ENCODE measurements at regions of chr2 and their contacts with region 1.

Region 1: GRCh38 chr2:223957092-223957851 is at the start of gene MRPL44:
- DNase-seq: peak; percentile 98
- ATAC-seq: peak; percentile 97
- H3K4me3 Mint-ChIP-seq: peak within 1 kb of the TSS; percentile 94
- H3K27ac Mint-ChIP-seq: peak within 1 kb of the TSS; percentile 92
- H3K4me1 Mint-ChIP-seq: peaks cover 74% of the 10 kb centered on the region
- H3K27me3 Mint-ChIP-seq: no peaks in the 10 kb centered on the region
- total RNA-seq, gene MRPL44: 37.5 to 39.7 TPM

Region 2: GRCh38 chr2:223760838-223761502 is 196.3 kb before region 1 on chr2:
- CTCF ChIA-PET with region 1: no interaction called
- POLR2A ChIA-PET with region 1: interaction called, 3 read pairs
- intact Hi-C with region 1: loop called in 1 of 2 experiments (anchors 5 kb)
- DNase-seq: peak; percentile 76
- ATAC-seq: peak; percentile 93
- H3K4me3 Mint-ChIP-seq: no peak overlapping the region
- H3K27ac Mint-ChIP-seq: peak overlapping the region; percentile 73
- H3K4me1 Mint-ChIP-seq: peaks cover 22% of the 10 kb centered on the region
- H3K27me3 Mint-ChIP-seq: no peaks in the 10 kb centered on the region

Region 3: DNA sequence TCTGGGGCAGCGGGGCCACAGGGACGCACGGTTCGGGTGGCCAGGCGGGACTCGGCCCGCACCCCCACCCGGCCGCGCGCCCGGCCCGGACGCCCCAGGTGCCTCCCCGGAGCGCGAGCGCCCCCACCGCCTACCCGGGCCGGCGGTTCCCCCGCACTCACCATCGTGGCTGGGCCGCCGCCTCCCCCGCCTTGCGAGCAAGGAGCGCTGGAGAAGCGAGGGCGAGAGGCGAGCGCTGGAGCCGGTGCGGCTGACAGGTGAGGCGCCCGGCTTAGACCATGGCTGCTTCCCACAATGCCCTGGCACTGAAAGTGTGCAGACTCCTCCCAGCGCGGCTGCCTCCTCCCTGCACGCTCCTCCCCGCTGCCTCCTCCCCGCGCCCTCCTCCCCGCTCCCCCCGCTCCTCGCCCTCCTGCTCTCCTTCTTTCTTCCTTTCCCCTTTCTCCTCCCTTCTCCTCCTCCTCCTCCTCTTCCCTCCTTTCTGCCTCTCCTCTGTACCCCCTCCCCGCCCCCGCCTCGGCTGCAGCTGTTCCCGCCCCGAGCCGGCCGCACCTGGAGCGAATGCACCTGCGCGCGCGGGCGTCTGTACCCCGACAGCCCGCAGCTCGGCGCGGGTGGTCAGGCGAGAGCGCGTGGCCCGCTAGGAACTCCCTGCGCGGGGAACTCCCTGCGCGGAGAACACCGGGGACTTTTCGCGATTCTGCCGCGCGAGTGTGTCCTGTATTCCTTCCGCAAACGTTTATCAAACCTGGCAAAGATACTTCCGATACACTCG is 119.8 kb before region 1 on chr2 and contains the start of gene AP1S3:
- CTCF ChIA-PET with region 1: no interaction called
- POLR2A ChIA-PET with region 1: no interaction called
- intact Hi-C with region 1: loop called (anchors 1 to 5 kb)
- DNase-seq: peak; percentile 88
- ATAC-seq: peak; percentile 98
- H3K4me3 Mint-ChIP-seq: peak within 1 kb of the TSS; percentile 86
- H3K27ac Mint-ChIP-seq: peak within 1 kb of the TSS; percentile 82
- H3K4me1 Mint-ChIP-seq: peaks cover 13% of the 10 kb centered on the region
- H3K27me3 Mint-ChIP-seq: no peaks in the 10 kb centered on the region
- total RNA-seq, gene AP1S3: 8.8 to 10.1 TPM

Region 4: DNA sequence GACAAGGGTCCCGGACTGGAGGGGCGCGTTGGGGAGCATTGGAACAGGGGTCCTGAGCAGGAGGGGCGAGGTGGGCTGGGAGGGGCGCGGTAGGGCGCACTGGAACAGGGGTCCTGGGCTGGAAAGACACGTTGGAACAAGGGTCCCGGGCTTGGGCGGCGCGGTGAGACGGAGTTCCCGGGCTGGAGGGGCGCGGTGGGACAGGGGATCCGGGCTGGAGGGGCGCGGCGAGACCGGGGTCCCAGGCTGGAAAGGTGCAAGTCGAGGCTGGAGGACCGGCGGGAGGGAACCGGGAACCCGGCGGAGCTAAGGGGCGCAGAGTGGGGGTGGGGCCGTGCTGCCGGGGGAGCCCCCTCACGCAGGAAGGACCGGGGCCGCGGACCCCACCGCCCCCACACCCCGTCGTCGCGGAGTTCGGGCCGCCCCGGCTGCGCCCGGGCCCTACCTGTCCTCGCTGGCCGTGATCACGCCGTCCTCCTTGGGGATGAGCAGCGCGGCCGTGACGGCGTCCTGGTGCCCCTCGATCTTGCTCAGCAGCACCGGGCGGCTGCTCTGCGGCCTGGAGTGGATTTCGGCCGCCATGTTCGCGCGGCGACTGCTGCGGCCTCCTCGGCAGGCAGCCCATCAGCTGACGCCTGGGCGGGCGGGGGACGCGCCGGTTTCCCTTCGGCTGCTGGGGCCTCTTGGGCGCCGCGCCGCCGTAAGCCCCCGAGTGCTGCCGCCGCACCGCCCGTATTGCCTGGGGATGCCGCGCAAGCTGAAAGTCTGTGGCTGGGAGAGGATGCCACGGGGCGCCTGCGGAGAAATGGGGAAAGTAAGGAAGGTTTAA is 12.4 kb before region 1 on chr2 and contains the start of gene WDFY1:
- CTCF ChIA-PET with region 1: interaction called, 10 read pairs
- POLR2A ChIA-PET with region 1: interaction called, 5 read pairs
- intact Hi-C with region 1: loop called (anchors 1 kb)
- DNase-seq: peak; percentile 90
- ATAC-seq: peak; percentile 52
- H3K4me3 Mint-ChIP-seq: peak within 1 kb of the TSS; percentile 90
- H3K27ac Mint-ChIP-seq: peak within 1 kb of the TSS; percentile 90
- H3K4me1 Mint-ChIP-seq: peaks cover 62% of the 10 kb centered on the region
- H3K27me3 Mint-ChIP-seq: peaks cover 1% of the 10 kb centered on the region
- total RNA-seq, gene WDFY1: 33.6 to 37.5 TPM

Region 5: GRCh38 chr2:223979730-223980396 is 22.6 kb after region 1 on chr2:
- CTCF ChIA-PET with region 1: no interaction called
- POLR2A ChIA-PET with region 1: no interaction called
- intact Hi-C with region 1: no loop called
- DNase-seq: no peak
- ATAC-seq: no peak
- H3K4me3 Mint-ChIP-seq: no peak overlapping the region
- H3K27ac Mint-ChIP-seq: no peak overlapping the region
- H3K4me1 Mint-ChIP-seq: no peaks in the 10 kb centered on the region
- H3K27me3 Mint-ChIP-seq: no peaks in the 10 kb centered on the region

Region 6: DNA sequence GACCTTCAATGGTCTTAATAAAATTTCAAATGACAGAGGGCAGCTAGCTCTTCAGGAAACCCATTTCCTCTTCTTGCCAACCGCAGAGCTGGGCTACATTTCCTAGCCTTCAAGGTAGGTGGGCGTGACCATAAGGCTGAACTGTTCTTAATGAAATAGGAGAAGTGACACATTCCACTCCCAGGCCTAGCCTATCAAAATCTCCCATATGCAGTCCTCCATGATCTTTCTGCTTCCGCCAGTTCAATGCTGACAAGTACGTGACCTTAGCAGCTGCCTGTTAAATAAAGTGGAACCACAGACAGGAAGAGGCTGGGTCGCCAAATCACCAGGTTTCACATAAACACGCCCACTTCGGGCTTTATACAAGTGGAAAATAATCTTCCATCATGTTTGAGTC is 68.6 kb after region 1 on chr2:
- CTCF ChIA-PET with region 1: interaction called, 3 read pairs
- POLR2A ChIA-PET with region 1: no interaction called
- intact Hi-C with region 1: loop called in 1 of 2 experiments (anchors 1 kb)
- DNase-seq: peak; percentile 81
- ATAC-seq: peak; percentile 94
- H3K4me3 Mint-ChIP-seq: peak overlapping the region; percentile 50
- H3K27ac Mint-ChIP-seq: peak overlapping the region; percentile 94
- H3K4me1 Mint-ChIP-seq: peaks cover 72% of the 10 kb centered on the region
- H3K27me3 Mint-ChIP-seq: no peaks in the 10 kb centered on the region

Region 7: DNA sequence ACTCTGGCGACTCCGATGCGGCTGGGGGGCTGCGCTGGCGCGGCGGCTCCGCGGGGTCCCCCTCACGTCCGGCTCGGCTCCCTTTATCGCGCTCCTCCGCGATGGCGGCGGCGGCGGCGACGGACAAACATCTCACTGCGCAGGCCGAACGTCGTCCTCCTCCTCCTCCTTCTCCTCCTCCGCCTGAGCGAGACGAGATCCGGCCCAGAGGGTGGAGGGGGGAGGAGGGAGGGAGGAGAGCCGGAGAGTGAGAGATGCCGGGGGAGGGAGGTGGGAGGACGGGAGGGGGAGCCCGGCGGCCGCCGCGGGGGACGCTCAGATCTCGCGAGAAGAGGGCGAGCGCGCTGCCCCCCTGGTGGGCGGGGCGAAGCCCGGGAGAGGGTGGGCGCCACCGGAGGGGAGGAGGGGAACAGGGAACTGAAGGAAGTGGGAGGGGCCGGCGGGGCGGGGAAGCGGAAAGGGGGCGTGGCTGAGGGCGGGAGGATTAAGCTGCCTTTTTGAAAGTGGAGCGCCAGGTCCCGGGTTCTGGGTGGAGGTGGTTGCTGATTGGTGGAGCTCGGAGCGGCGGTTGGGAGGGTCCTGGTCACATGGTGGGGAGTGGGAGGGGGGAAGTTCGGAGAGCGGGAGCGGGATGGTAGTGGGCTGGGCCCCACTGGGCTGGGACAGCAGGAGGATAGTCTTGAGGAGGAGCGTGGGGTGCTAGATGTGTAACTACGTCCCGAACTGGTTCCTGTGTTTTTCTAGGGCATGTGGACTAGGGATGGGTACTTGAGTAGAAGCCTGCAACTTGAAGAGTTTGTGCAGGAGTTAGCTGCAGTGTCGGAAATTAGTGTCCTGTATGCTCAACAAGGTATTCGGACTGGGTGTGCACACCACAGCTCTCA is 628.2 kb after region 1 on chr2 and contains the start of gene CUL3:
- CTCF ChIA-PET with region 1: no interaction called
- POLR2A ChIA-PET with region 1: no interaction called
- intact Hi-C with region 1: loop called (anchors 1 to 5 kb)
- DNase-seq: peak; percentile 100
- ATAC-seq: peak; percentile 86
- H3K4me3 Mint-ChIP-seq: peak within 1 kb of the TSS; percentile 95
- H3K27ac Mint-ChIP-seq: peak within 1 kb of the TSS; percentile 96
- H3K4me1 Mint-ChIP-seq: peaks cover 29% of the 10 kb centered on the region
- H3K27me3 Mint-ChIP-seq: no peaks in the 10 kb centered on the region
- total RNA-seq, gene CUL3: 77.6 to 85.8 TPM

Region 8: DNA sequence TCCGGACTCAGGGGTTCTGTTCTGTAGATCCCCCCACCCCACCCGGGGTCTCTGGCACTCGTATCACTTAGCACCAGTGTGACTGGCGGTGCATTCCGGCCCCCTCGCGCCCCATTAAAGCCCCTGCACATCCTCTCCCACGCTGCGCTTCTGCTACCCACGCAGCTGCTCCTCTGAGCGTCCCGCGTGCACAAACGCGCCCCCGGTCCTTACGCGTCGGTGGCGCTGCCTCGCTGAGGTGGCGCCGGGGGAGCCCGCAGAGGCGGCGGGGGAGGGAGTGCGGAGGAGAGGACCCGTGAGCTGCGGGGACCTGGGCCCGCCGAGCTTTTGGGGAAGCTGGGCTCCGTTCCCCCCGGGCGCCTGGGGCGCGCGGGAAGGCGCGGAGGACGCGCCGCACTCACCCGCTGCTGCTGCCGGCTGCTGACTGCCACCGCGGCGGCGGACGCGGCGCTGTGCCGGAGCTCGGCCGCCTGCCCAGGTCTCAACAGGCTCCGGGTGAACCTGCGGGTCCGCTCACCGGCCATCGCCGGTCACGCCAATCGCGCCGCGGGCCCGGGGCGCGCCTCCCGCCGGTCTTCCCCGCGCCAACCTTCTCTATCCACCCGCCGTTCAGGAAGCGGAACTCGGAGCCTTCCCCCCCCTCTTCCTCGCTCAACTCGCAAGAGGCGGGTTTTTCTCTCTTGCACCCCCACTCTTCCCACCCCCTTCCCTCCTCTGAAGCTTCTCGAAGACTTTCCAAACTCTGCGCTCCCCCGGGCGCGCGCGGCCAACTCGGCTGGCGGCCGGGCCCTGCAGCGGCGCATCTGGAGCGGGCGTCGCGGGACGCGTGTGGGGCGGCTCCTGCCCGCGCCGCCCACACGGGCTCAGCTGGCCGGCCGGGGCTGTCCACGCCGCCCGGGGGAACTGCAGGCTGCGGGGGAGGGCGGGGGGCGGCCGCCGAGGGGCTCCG is 1084.9 kb after region 1 on chr2 and contains the start of gene DOCK10:
- CTCF ChIA-PET with region 1: no interaction called
- POLR2A ChIA-PET with region 1: no interaction called
- intact Hi-C with region 1: loop called in 1 of 2 experiments (anchors 5 kb)
- DNase-seq: peak; percentile 76
- ATAC-seq: peak; percentile 20
- H3K4me3 Mint-ChIP-seq: peak within 1 kb of the TSS; percentile 97
- H3K27ac Mint-ChIP-seq: peak within 1 kb of the TSS; percentile 98
- H3K4me1 Mint-ChIP-seq: peaks cover 50% of the 10 kb centered on the region
- H3K27me3 Mint-ChIP-seq: peaks cover 3% of the 10 kb centered on the region
- total RNA-seq, gene DOCK10: 177 to 196 TPM